Calu3 (cell line): ENCODE measurements at regions of chr12 and their contacts with region 1.

Region 1: DNA sequence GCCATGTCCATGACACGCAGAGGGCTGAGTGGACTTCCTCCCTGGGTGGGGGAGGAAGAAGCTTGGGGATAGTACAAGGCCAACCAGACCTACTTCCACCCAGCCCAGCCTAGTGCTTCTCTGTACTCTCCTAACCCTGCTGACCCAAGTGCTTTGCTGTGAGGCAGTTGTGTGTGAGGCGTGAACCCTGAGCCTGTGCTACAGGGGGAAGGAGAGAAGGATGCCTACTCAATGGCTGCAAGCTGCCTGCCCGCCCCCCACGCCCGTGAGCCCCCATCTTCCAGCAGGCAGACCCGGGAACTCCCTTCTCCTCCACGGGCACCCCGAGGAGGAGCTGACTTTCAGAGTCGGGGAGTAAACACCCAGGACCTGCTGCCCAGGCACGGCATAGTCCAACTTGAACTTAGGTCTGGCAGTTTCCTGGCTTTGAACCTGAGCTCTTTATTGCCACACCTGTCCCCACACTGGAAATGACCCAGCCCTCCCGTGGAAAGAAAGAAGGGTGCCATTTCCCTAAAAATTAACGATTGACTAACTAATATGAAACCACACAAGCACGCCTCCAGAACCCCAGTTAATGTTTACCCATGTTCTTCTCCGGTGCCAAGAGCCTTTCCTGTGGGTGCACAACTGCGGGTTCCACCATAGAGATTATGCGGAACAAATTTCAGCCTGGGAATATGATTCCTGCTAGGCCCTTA is 10.8 kb downstream of the ALDH2 start:
- DNase-seq: peak; percentile 85
- H3K4me3 Mint-ChIP-seq: peak overlapping the region; percentile 61
- H3K27ac Mint-ChIP-seq: peak overlapping the region; percentile 95
- H3K4me1 Mint-ChIP-seq: peaks cover 63% of the 10 kb centered on the region
- H3K27me3 Mint-ChIP-seq: no peaks in the 10 kb centered on the region
- CTCF ChIP-seq: no peak

Region 2: GRCh38 chr12:111766608-111767361 is 10.7 kb before region 1 on chr12 and contains the start of gene ALDH2:
- CTCF ChIA-PET with region 1: interaction called, 19 read pairs
- intact Hi-C with region 1: no loop called
- DNase-seq: peak; percentile 79
- H3K4me3 Mint-ChIP-seq: peak within 1 kb of the TSS; percentile 91
- H3K27ac Mint-ChIP-seq: peak within 1 kb of the TSS; percentile 85
- H3K4me1 Mint-ChIP-seq: peaks cover 22% of the 10 kb centered on the region
- H3K27me3 Mint-ChIP-seq: no peaks in the 10 kb centered on the region
- CTCF ChIP-seq: no peak
- total RNA-seq, gene ALDH2: 152 and 168 TPM in 2 replicates